ENCODE measurements at regions of chr19 and their contacts with region 1.

Region 1: DNA sequence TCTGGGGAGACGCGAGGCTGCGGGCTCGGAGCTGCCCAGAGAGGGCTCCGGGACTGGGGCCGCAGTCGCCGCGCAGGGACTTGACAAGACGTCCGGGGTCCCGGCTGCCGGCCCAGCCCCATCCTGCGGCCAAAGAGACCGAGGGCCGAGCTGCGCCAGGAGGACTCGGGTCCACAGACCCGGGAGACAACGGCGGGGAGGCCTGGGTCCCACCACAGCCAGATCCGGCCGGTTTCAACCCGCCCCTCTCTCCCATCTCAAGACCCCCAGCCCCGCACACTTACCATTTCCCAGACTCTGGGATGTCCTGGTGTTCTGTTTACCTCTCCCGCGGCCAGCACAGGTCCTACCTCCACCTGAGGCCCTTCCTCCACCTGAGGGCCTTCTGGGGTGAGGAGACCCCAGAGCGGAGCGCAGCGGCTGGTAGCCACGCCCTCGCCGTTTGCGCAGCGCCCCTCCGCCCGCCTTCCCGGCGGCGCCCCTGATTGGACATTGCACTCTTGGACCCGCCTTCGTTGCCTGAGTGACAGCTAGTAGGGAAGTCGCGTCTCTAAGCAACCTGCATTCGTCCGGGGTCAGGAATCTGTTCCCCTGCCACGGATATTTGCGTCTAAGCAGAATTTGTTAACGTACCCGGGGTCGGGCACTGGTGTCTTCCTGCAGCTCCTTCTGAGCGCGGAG is at the start of gene ZNF709:
- DNase-seq: peak; percentile 95
- H3K4me3 ChIP-seq: peak within 1 kb of the TSS; percentile 67 to 85
- H3K27ac ChIP-seq: peak within 1 kb of the TSS; percentile 28 to 74; a peak in 3 of 4 replicates
- H3K4me1 ChIP-seq: peaks cover 0 to 7% of the 10 kb centered on the region in 2 experiments; a peak in 2 of 4 replicates
- H3K27me3 ChIP-seq: no peaks in the 10 kb centered on the region
- CTCF ChIP-seq: no peak
- EP300 ChIP-seq: no peak
- RAD21 ChIP-seq: no peak
- polyA plus RNA-seq, gene ZNF709: 0.64 and 0.99 TPM in 2 replicates

Region 2: DNA sequence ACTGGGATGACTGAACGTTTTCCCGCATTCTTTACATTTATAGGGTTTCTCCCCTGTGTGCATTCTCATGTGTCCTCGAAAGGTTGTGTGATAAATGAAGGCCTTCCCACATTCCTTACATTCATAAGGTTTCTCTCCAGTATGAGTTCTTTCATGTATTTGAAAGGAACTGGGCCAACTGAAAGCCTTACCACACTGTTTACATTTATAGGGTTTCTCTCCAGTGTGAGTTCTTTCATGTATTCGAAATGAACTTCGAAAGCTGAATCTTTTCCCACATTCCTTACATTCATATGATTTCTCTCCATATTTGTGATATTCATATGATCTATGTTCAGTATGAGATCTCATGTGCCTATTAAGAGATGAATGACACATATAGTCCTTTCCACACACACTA is 19.3 kb before region 1 on chr19:
- CTCF ChIA-PET with region 1: no interaction called
- POLR2A ChIA-PET with region 1: no interaction called
- DNase-seq: no peak
- H3K4me3 ChIP-seq: no peak overlapping the region; a peak in 1 of 4 replicates
- H3K27ac ChIP-seq: no peak overlapping the region
- H3K4me1 ChIP-seq: no peaks in the 10 kb centered on the region
- H3K27me3 ChIP-seq: no peaks in the 10 kb centered on the region
- CTCF ChIP-seq: no peak
- EP300 ChIP-seq: no peak
- RAD21 ChIP-seq: no peak

Region 3: DNA sequence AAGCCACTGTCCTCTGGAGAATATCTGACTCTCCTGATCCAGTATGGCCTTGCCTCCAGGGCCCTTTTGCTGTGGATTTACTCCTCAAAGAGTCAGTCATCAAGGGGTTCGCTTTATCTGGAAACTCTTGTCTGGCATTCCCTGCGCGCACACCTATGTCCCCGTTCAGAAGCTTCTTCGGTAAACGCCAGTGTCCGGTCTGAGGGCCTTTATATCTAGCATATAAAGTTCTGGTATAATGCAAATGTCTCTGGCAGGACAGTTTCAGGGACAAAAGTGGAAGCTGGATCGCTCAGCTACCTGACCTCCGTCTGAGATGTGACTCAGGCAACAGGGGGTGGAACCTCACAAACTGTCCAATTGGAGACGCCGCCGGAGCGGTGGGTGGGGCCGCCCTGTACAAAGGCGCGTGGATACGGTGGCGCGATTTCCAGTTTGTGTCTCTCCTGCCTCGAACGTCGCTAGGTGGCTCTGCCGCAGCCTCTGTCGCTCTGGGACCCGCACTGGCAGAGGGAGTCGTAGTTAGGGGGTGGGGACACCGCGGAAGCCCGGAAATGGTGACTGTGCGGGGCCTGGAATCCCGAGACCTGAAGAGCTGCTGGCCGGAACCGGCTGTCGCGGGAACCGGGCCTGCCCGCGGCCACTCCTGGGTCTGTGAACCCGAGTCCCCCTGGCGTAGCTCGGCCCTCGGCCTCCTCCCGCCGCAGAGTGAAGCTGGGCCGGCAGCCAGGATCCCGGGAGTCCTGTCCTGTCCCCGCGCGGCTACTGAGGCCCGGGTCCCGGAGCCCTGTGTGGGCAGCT is 10.7 kb after region 1 on chr19:
- CTCF ChIA-PET with region 1: interaction called, 10 read pairs
- POLR2A ChIA-PET with region 1: interaction called, 16 read pairs
- DNase-seq: peak; percentile 93
- H3K4me3 ChIP-seq: peak overlapping the region; percentile 55 to 69
- H3K27ac ChIP-seq: peak overlapping the region in 1 of 2 experiments; percentile 80; a peak in 3 of 4 replicates
- H3K4me1 ChIP-seq: peaks cover 0 to 3% of the 10 kb centered on the region in 2 experiments; a peak in 1 of 4 replicates
- H3K27me3 ChIP-seq: no peaks in the 10 kb centered on the region
- CTCF ChIP-seq: peak; percentile 37
- EP300 ChIP-seq: no peak
- RAD21 ChIP-seq: peak; percentile 60

Region 4: GRCh38 chr19:12580163-12580694 is 95.7 kb after region 1 on chr19:
- CTCF ChIA-PET with region 1: no interaction called
- POLR2A ChIA-PET with region 1: no interaction called
- DNase-seq: no peak
- H3K4me3 ChIP-seq: no peak overlapping the region; a peak in 1 of 4 replicates
- H3K27ac ChIP-seq: no peak overlapping the region
- H3K4me1 ChIP-seq: no peaks in the 10 kb centered on the region
- H3K27me3 ChIP-seq: no peaks in the 10 kb centered on the region
- CTCF ChIP-seq: no peak
- EP300 ChIP-seq: no peak
- RAD21 ChIP-seq: no peak